ENCODE measurements at regions of chr2 and their contacts with region 1.

Region 1: DNA sequence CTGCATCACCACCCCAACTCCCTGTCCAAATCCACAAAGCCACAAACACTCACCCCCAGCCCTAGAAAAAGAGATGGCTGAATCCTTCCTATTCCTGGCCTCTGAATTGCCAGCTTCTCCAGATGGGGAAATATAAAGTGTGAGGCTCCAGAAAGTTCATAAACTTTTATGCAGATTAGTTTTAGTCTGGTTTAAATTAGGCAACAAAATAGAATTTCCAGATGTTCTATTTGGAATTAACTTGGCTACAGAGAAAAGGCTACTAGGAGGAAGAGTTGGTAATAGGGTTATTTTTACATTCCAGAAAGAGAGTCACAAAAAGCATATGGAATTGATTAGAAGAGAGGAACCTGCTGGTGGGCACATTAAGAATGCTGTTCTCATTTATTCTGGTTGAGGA is 56.0 kb downstream of the EN1 start:
- DNase-seq: no peak
- H3K4me3 ChIP-seq: no peak overlapping the region
- CTCF ChIP-seq: no peak

Region 2: DNA sequence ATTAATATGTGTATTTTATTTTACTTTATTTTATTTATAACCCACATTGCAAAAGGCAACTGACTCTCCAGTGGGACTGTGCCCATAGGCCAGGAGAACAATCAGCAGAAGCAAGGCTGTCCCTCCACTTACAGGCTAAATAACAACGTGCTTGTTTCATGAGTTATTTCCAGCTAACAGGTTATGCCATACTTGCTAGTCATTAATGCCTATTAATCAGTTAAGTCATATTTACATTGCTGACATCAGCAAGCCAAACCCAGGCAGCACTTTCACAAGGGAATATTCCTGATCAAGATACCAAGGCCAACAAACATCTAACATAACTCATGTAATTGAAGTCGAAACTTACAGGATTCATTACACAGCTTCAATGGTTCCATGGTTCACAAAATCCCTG is 36.1 kb before region 1 on chr2:
- in situ Hi-C with region 1: loop called (anchors 5 kb)
- DNase-seq: no peak
- H3K4me3 ChIP-seq: no peak overlapping the region
- CTCF ChIP-seq: no peak

Measured in astrocyte of the cerebellum (primary cell).